ENCODE measurements at regions of chr3 and their contacts with region 1.

Region 1: GRCh38 chr3:138935848-138936740 is 10.8 kb downstream of the FOXL2 start:
- DNase-seq: peak in 8 of 10 donors; percentile 39 to 77 (median 56)
- H3K4me3 ChIP-seq: peak overlapping the region in 58 of 59 donors; percentile 25 to 73 (median 51)
- H3K27ac ChIP-seq: peak overlapping the region in 1 of 59 donors; percentile 7
- H3K27me3 ChIP-seq: peaks cover 22 to 58% (median 52%) of the 10 kb centered on the region in 45 donors
- CTCF ChIP-seq: peak; percentile 65 to 96 (median 90)

Region 2: GRCh38 chr3:138975351-138975750 is 39.3 kb after region 1 on chr3:
- intact Hi-C with region 1: loop called in 1 of 2 experiments (anchors 5 kb)
- DNase-seq: no peak
- H3K4me3 ChIP-seq: no peak overlapping the region
- H3K27ac ChIP-seq: no peak overlapping the region
- H3K27me3 ChIP-seq: peaks cover 0 to 10% (median 0%) of the 10 kb centered on the region in 45 donors
- CTCF ChIP-seq: no peak

Region 3: DNA sequence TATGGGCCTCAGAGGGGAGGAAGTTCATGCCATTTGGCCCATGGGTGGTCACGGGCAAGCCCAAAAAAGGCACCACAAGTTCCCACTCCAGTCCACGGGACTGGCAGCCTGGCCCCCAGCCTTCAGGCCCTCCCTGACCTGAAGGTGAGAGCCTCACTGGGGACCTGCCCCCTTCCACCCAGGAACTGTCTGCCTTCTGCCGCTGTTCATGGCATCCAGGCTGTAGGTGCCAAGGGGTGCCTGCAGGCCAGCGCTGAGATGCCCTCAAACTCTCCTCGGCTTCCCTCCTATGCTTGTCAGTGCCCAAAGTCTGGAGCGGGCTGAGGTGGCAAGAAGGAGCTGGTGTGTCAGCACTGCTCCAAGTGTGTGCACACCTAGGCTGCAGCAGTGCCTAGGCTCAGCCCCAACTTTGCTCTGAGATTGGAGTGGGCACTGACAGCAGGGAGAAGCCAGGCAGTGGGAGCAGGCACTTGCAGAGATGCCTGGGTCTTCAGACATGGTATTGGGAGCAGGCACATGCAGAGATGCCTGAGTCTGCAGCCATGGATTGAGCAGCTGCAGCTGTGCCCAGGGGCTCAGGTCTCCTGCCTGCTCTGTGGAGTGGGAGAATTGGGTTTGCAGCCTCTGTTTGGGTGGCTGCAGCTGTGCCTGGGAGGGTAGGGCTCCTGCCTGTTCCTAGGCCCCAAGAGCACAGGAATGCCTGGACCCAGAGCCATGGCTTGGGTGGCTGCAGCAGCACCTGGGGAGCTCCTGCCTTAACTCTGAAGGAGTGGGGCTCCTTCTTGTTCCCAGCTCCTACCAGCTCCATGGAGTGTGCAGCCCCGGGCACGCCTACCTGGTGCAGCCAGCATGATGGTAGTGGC is 152.6 kb after region 1 on chr3:
- intact Hi-C with region 1: no loop called
- DNase-seq: no peak
- H3K4me3 ChIP-seq: no peak overlapping the region
- H3K27ac ChIP-seq: no peak overlapping the region
- H3K27me3 ChIP-seq: no peaks in the 10 kb centered on the region
- CTCF ChIP-seq: no peak

Region 4: DNA sequence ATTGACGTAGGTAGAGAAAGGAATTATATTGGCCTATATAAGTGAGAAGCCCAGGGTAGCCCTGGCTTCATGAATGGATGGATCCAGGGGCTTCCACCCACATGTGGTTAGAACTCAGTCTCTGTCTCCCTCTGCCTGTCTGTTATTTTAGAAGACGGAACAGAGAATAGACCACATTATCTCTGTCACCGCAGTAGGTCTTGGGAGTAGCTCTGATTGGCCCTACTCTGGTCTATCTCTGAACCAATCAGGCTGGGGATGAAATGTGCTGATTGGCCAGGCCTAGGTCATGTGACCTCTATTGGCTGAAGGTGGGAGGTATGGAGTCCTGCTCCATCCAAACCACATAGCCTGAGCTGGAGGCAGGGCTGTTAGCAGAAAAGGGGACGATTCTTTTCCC is 251.6 kb after region 1 on chr3:
- intact Hi-C with region 1: loop called in 1 of 2 experiments (anchors 5 kb)
- DNase-seq: no peak
- H3K4me3 ChIP-seq: no peak overlapping the region
- H3K27ac ChIP-seq: no peak overlapping the region
- H3K27me3 ChIP-seq: no peaks in the 10 kb centered on the region
- CTCF ChIP-seq: peak in 34 of 56 donors; percentile 10 to 66 (median 38)

Region 5: DNA sequence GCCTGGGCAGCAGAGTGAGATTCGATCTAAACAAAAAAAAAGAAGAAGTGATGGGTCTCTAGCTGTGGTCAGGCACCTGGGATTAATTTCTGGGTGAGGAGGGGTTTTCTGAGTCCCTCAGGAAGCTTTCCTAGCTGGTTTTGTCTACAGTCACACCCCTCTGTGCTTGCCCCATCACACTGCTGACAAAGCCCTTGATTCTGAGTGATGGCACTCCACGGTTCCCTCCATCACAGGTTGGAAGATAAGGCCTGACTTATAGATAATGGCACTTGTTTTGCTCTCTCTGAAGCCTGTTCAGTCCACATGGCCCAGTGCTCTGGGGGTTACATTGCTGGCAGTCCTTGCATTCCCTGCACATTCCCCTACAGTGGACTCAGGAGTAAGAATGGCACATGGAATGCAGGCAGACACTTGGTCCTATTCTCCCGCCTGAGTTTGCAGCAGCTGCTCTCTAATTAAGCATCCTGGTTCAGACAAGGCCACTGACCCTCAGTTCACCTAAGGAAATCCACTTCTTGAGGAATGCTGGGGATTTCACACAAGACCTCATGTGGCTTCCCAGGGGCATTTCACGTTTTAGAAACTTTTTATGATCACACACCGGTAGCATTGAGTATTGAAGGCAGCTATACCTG is 822.7 kb after region 1 on chr3:
- intact Hi-C with region 1: no loop called
- DNase-seq: no peak
- H3K4me3 ChIP-seq: no peak overlapping the region
- H3K27ac ChIP-seq: no peak overlapping the region
- H3K27me3 ChIP-seq: no peaks in the 10 kb centered on the region
- CTCF ChIP-seq: no peak

Measured in dorsolateral prefrontal cortex (tissue), 120 donors.